Left lung (tissue), 14 donors: ENCODE measurements at regions of chr10 and their contacts with region 1.

Region 1: GRCh38 chr10:21495752-21496342 is 29.6 kb downstream of the SKIDA1 start:
- DNase-seq: peak; percentile 86 to 97 (median 94)
- ATAC-seq: peak; percentile 93
- H3K4me3 ChIP-seq: peak overlapping the region; percentile 62 to 76
- H3K27ac ChIP-seq: peak overlapping the region; percentile 50 to 62
- H3K4me1 ChIP-seq: peaks cover 0 to 51% of the 10 kb centered on the region in 2 donors
- H3K27me3 ChIP-seq: peaks cover 9 to 74% of the 10 kb centered on the region in 2 donors
- CTCF ChIP-seq: peak; percentile 98 to 99

Region 2: DNA sequence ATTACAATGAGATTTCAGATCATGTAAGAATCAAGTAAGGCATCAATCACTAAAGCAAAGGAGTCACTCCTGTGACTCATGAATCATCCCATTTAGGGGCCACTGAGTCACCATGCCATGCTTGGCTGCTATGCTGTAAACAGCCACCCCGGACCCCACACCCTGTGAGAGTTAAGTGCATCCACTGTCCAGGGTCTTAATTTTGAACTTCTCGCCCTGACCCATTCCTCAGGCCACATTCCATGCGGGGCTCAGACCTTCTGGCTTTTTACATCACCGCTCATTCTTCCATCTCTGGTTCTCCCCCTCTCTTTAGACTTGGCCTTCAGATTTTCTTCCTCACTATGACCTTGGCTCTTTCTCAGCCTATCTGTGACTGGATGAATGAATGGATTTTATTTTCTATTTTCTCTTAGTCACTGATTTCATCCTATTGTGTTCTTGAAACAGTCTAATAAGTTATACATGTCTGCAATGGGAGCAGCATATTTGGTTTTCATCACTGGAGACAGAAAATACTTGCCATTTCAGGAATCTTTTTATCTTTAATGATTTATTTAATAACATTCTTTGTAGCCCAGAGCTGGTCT is 210.0 kb before region 1 on chr10:
- intact Hi-C with region 1: loop called in 1 of 2 experiments (anchors 10 kb)
- DNase-seq: no peak
- ATAC-seq: no peak
- H3K4me3 ChIP-seq: no peak overlapping the region
- H3K27ac ChIP-seq: no peak overlapping the region
- H3K4me1 ChIP-seq: no peaks in the 10 kb centered on the region
- H3K27me3 ChIP-seq: no peaks in the 10 kb centered on the region
- CTCF ChIP-seq: no peak

Region 3: DNA sequence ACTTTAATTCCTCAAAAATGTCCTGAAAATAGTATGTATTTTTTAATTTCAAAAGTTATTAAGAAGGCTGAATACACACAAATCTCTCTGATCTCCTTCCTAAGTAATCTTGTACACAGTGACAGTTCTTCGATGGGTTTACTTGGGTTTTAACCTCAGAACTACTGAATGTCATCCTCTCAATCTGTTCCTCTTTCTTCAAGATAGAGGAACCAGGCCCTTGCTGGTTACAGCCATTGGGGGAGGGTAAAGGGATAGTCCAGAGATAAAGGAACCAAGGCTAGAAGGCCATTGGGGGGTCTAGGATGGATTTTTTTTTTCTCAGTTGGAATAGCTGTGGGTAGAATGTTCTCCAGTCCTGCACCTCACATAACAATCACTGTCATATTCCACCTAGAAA is 195.3 kb before region 1 on chr10:
- intact Hi-C with region 1: no loop called
- DNase-seq: no peak
- ATAC-seq: peak; percentile 61
- H3K4me3 ChIP-seq: no peak overlapping the region
- H3K27ac ChIP-seq: no peak overlapping the region
- H3K4me1 ChIP-seq: no peaks in the 10 kb centered on the region
- H3K27me3 ChIP-seq: no peaks in the 10 kb centered on the region
- CTCF ChIP-seq: no peak

Region 4: DNA sequence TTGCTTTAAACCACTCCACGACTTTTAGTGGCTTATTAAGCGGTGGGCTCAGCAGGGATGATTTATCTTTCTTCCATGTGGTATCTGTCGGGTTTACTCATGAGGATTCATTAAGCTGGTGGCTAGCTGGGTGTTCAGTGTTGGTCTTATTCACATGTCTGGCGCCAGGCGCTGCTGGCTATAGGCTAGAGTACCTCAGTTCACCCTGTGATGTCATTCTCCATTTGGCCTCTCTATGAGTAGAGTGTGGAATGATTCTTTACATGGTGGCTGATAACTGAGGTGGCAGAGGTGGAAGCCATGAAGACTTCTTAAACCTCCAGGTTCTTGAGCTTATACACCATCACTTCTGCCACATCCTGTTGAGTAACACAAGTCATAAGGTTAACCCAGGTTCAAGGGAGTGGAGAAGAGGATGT is 153.6 kb after region 1 on chr10:
- intact Hi-C with region 1: no loop called
- DNase-seq: no peak
- ATAC-seq: no peak
- H3K4me3 ChIP-seq: no peak overlapping the region
- H3K27ac ChIP-seq: no peak overlapping the region
- H3K4me1 ChIP-seq: peaks cover 0 to 8% of the 10 kb centered on the region in 2 donors
- H3K27me3 ChIP-seq: no peaks in the 10 kb centered on the region
- CTCF ChIP-seq: no peak

Region 5: GRCh38 chr10:22997102-22997501 is 1501.3 kb after region 1 on chr10:
- intact Hi-C with region 1: loop called in 1 of 2 experiments (anchors 10 kb)
- DNase-seq: no peak
- ATAC-seq: no peak
- H3K4me3 ChIP-seq: no peak overlapping the region
- H3K27ac ChIP-seq: no peak overlapping the region
- H3K4me1 ChIP-seq: no peaks in the 10 kb centered on the region
- H3K27me3 ChIP-seq: peaks cover 3 to 50% of the 10 kb centered on the region in 2 donors
- CTCF ChIP-seq: no peak